ENCODE measurements at regions of chr3 and their contacts with region 1.

Region 1: DNA sequence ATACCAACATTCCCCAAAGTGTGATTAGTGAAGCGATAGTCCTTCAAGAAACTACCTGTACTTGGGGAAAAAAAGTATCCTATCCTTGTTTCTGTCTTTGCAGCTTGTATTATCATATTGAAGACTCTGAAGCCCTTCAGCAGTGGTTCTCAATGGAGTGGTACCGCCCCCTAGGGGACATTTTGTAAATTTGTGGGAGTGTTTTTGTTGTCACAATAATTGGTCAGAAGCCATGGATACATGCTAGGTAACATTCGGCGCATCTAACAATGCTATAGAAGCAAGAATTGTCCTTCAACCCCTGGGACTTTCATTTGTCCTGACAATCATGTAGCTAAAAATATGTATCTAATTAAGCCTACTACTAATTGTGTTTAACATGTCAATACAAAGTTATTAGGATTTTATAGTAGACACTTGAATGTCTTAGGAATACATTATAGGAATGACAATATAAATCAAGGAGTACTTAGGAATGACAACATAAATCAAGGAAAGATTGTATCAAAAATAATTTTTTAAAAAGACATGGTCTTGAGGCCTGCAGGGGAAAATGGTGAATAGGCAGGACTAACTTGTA is 53.7 kb downstream of the NMD3 start:
- DNase-seq: peak; percentile 63
- ATAC-seq: no peak
- H3K4me3 Mint-ChIP-seq: no peak overlapping the region
- H3K27ac Mint-ChIP-seq: no peak overlapping the region
- H3K4me1 Mint-ChIP-seq: peaks cover 4% of the 10 kb centered on the region
- H3K27me3 Mint-ChIP-seq: no peaks in the 10 kb centered on the region

Region 2: DNA sequence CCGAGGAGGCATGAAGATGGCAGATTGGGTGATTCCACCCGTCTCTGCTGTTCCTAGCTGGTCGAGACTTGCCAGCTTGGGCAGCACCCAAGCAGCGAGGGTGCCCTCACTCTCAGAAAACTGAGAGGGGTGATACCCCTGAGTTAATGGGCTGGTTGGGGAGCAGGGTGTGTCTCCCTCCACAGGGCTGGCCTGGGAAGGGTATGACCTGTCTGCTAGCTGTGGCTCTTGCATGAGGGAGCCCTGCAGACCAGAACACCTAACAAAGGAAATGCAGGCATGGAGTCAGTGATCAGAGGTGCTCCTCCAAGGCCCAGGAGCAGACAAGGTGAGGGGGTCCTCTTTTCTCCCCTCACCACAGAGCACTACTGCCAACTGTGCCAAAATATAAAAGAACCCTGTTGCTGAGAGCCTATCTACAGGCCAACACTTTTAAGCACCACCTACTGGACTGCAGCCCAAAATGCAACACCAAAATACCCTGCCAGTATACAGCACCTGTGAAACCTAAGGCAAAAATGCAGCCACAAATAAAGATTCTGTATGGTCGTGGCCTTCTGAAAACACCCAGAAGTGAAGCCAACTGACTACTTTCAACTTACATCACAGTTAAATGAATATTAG is 554.6 kb before region 1 on chr3:
- CTCF ChIA-PET with region 1: no interaction called
- DNase-seq: no peak
- ATAC-seq: no peak
- H3K4me3 Mint-ChIP-seq: no peak overlapping the region
- H3K27ac Mint-ChIP-seq: no peak overlapping the region
- H3K4me1 Mint-ChIP-seq: no peaks in the 10 kb centered on the region
- H3K27me3 Mint-ChIP-seq: peaks cover 29% of the 10 kb centered on the region

Region 3: GRCh38 chr3:161409069-161409468 is 134.3 kb after region 1 on chr3:
- CTCF ChIA-PET with region 1: interaction called, 24 read pairs
- DNase-seq: no peak
- ATAC-seq: no peak
- H3K4me3 Mint-ChIP-seq: no peak overlapping the region
- H3K27ac Mint-ChIP-seq: no peak overlapping the region
- H3K4me1 Mint-ChIP-seq: peaks cover 6% of the 10 kb centered on the region
- H3K27me3 Mint-ChIP-seq: peaks cover 57% of the 10 kb centered on the region

Region 4: DNA sequence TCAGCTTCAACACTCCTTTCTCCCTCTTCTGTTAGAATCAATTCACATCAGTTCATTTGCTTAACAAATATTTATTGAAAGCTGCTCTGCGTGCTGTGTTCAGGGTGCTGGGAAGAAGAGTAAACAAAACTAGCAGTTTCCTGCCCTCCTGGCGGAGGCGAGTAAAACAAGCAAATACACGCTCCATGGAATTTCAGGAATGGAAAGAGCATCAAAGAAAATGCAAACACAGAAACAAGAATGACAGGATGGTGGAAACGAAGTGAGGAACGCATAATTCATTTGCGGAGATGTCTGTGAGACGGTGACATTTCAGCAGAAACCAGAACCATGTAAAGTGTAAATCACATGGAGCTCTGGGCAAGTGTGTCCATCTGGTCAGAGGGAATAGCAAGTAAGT is 146.0 kb after region 1 on chr3:
- CTCF ChIA-PET with region 1: interaction called, 19 read pairs
- DNase-seq: no peak
- ATAC-seq: no peak
- H3K4me3 Mint-ChIP-seq: no peak overlapping the region
- H3K27ac Mint-ChIP-seq: no peak overlapping the region
- H3K4me1 Mint-ChIP-seq: no peaks in the 10 kb centered on the region
- H3K27me3 Mint-ChIP-seq: peaks cover 9% of the 10 kb centered on the region

Measured in activated CD8-positive, alpha-beta memory T cell treated with anti-CD3 and anti-CD28 coated beads, Interleukin-2, amount 10 ng/mL, durations not matched to agents 7 days and 5 days (primary cell).